Mammary epithelial cell (primary cell): ENCODE measurements at regions of chr11 and their contacts with region 1.

Region 1: GRCh38 chr11:30128269-30128932 is 102.4 kb upstream of the FSHB start:
- DNase-seq: peak; percentile 32
- H3K4me3 ChIP-seq: no peak overlapping the region
- H3K27ac ChIP-seq: no peak overlapping the region
- H3K4me1 ChIP-seq: no peaks in the 10 kb centered on the region
- H3K27me3 ChIP-seq: no peaks in the 10 kb centered on the region
- CTCF ChIP-seq: peak; percentile 74 to 91

Region 2: DNA sequence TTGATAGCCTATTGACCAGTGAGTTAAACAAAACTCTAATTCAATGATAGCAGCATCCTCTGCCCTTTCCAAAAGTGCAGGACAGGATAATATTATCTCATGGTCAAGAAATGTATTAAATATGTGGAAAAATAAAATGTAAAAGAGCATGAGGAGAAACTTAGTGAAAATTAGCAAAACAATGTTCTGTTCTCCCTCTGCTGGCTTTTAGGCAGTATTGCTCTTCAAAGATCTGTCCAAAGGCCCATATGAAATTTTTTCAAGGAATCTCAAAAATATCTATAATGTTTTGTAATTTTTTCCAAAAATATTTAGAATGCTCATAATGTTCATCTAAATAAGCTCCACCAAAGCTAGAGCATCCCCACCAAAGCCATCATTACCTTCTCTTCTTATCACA is 186.2 kb after region 1 on chr11:
- CTCF ChIA-PET with region 1: interaction called, 6 read pairs
- dilution Hi-C with region 1: no loop called
- in situ Hi-C with region 1: loop called in 1 of 2 experiments (anchors 10 kb)
- intact Hi-C with region 1: loop called (anchors 1 kb)
- DNase-seq: no peak
- H3K4me3 ChIP-seq: no peak overlapping the region
- H3K27ac ChIP-seq: no peak overlapping the region
- H3K4me1 ChIP-seq: peaks cover 6% of the 10 kb centered on the region
- H3K27me3 ChIP-seq: no peaks in the 10 kb centered on the region
- CTCF ChIP-seq: peak; percentile 61 to 62